Naive thymus-derived CD4-positive, alpha-beta T cell (primary cell): ENCODE measurements at regions of chr17 and their contacts with region 1.

Region 1: GRCh38 chr17:42153919-42154742 is 658 bp downstream of the RAB5C start:
- DNase-seq: no peak
- ATAC-seq: no peak
- H3K4me3 ChIP-seq: peak overlapping the region; percentile 76
- H3K4me3 Mint-ChIP-seq: peak overlapping the region; percentile 81 to 97 (median 94)
- H3K27ac ChIP-seq: peak overlapping the region; percentile 94
- H3K27ac Mint-ChIP-seq: peak overlapping the region; percentile 79 to 96 (median 93)
- H3K4me1 ChIP-seq: peaks cover 10 to 16% of the 10 kb centered on the region in 2 donors
- H3K4me1 Mint-ChIP-seq: peaks cover 21 to 43% (median 37%) of the 10 kb centered on the region in 7 donors
- H3K27me3 ChIP-seq: no peaks in the 10 kb centered on the region
- H3K27me3 Mint-ChIP-seq: no peaks in the 10 kb centered on the region

Region 2: GRCh38 chr17:41918314-41919164 is 235.6 kb before region 1 on chr17 and contains the start of gene ACLY:
- CTCF ChIA-PET with region 1: no interaction called
- POLR2A ChIA-PET with region 1: no interaction called
- intact Hi-C with region 1: loop called in 1 of 2 experiments (anchors 2 kb)
- DNase-seq: peak; percentile 88 to 99 (median 92)
- ATAC-seq: peak; percentile 100
- H3K4me3 ChIP-seq: peak within 1 kb of the TSS; percentile 94
- H3K4me3 Mint-ChIP-seq: peak within 1 kb of the TSS; percentile 84 to 99 (median 89)
- H3K27ac ChIP-seq: peak within 1 kb of the TSS; percentile 79
- H3K27ac Mint-ChIP-seq: peak within 1 kb of the TSS; percentile 48 to 97 (median 78)
- H3K4me1 ChIP-seq: peaks cover 8 to 14% of the 10 kb centered on the region in 2 donors
- H3K4me1 Mint-ChIP-seq: peaks cover 29 to 48% (median 35%) of the 10 kb centered on the region in 7 donors
- H3K27me3 ChIP-seq: no peaks in the 10 kb centered on the region
- H3K27me3 Mint-ChIP-seq: no peaks in the 10 kb centered on the region
- total RNA-seq, gene ACLY: 59.2 to 154 (median 70.8) TPM

Region 3: DNA sequence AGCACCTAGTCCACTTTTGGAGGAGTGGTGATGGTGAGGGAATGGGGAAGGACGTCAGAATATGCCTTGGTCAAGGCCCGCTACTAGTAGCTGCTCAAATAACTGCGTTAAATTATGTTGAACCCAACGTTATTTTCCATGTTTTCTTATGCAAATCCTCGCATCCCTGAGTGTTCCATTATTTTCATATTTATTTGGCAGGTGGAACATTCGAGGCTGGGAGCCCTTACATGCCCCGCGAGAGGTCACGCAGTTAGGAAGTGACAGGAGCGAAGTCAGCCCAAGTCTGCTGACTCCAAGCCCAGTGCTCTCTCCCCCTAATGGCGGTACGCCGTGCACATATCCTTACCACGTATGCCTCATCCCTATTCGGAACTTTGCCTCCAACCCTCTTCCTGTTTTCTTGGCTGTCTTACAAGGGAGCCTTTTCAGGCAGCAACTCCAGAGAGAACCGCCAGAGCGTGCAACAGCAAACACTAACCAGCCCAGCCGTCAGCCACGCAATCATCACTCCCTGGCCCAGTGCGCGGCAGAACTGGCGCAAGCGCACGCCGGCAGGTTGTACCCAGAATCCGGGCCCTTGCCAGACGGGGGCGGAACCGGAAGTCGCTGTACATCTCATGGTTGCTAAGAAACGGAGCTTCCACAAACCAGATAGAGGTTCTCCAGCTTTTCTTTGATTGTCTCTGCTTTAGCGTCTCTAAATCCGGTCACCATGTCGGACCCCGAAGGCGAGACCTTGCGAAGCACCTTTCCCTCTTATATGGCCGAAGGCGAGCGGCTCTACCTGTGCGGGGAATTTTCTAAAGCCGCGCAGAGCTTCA is 223.9 kb before region 1 on chr17 and contains the start of gene ODAD4:
- CTCF ChIA-PET with region 1: no interaction called
- POLR2A ChIA-PET with region 1: interaction called, 6 read pairs
- intact Hi-C with region 1: loop called in 1 of 2 experiments (anchors 1 kb)
- DNase-seq: peak; percentile 87 to 98 (median 97)
- ATAC-seq: peak; percentile 98
- H3K4me3 ChIP-seq: peak within 1 kb of the TSS; percentile 79
- H3K4me3 Mint-ChIP-seq: peak within 1 kb of the TSS; percentile 93 to 100 (median 96)
- H3K27ac ChIP-seq: peak within 1 kb of the TSS; percentile 84
- H3K27ac Mint-ChIP-seq: peak within 1 kb of the TSS; percentile 90 to 100 (median 96)
- H3K4me1 ChIP-seq: peaks cover 9 to 11% of the 10 kb centered on the region in 2 donors
- H3K4me1 Mint-ChIP-seq: peaks cover 18 to 52% (median 24%) of the 10 kb centered on the region in 7 donors
- H3K27me3 ChIP-seq: no peaks in the 10 kb centered on the region
- H3K27me3 Mint-ChIP-seq: no peaks in the 10 kb centered on the region
- total RNA-seq, gene ODAD4: 0.16 to 4.1 (median 1.6) TPM in 4 of 5 experiments, not detected in the other

Region 4: GRCh38 chr17:42120770-42121769 is 33.1 kb before region 1 on chr17 and contains the start of gene KAT2A:
- CTCF ChIA-PET with region 1: no interaction called
- POLR2A ChIA-PET with region 1: interaction called, 5 read pairs
- intact Hi-C with region 1: loop called (anchors 1 kb)
- DNase-seq: peak; percentile 48 to 80 (median 68)
- ATAC-seq: peak; percentile 92
- H3K4me3 ChIP-seq: peak within 1 kb of the TSS; percentile 56
- H3K4me3 Mint-ChIP-seq: peak within 1 kb of the TSS; percentile 58 to 85 (median 74)
- H3K27ac ChIP-seq: peak within 1 kb of the TSS; percentile 75
- H3K27ac Mint-ChIP-seq: peak within 1 kb of the TSS in 8 of 9 donors; percentile 31 to 79 (median 68)
- H3K4me1 ChIP-seq: peaks cover 4 to 15% of the 10 kb centered on the region in 2 donors
- H3K4me1 Mint-ChIP-seq: peaks cover 10 to 35% (median 21%) of the 10 kb centered on the region in 7 donors
- H3K27me3 ChIP-seq: no peaks in the 10 kb centered on the region
- H3K27me3 Mint-ChIP-seq: no peaks in the 10 kb centered on the region
- total RNA-seq, gene KAT2A: 39.6 to 71.1 (median 49.1) TPM

Region 5: DNA sequence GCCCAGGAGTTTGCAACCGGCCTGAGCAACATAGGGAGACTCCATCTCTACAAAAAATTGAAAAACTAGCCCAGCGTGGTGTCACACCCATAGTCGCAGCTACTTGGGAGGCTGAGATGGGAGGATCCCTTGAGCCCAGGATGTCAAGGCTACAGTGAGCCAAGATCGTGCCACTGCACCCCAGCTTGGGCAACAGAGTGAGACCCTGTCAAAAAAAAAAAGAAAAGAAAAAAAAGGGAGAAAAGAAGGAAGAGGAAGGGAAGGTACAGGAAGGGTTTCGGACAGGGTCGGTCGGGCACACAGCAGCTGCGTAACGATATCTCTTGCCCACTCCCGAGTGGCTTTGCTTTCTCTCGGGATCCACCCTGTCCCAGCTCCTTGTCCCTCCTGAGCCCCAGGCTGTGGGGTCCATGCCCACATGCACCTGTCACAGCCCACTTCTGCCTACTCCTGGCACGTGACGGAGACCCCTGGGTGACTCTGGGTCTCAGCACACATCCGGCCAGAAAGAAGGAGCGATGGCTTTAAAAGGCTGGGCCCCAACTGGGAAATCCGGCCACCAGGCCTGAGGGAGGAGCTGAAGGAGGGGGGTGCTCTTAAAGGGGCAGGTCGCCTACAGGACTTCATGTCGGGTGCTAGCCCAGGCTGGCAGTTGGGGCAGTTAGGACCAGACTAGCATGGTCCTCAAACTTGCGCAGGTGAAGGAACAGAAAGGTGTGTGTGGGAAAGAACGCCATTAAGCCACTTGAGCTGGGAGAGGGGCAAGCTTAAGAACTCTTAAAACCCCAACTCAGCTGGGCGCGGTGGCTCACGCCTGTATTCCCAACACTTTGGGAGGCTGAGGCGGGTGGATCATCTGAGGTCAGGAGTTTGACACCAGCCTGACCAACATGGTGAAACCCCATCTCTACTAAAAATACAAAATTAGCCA is 40.1 kb after region 1 on chr17 and contains the start of gene GHDC:
- CTCF ChIA-PET with region 1: interaction called, 6 read pairs
- POLR2A ChIA-PET with region 1: no interaction called
- intact Hi-C with region 1: loop called (anchors 1 kb)
- DNase-seq: peak; percentile 48 to 83 (median 75)
- ATAC-seq: peak; percentile 94
- H3K4me3 ChIP-seq: peak within 1 kb of the TSS; percentile 98
- H3K4me3 Mint-ChIP-seq: peak within 1 kb of the TSS; percentile 93 to 99 (median 95)
- H3K27ac ChIP-seq: peak within 1 kb of the TSS; percentile 82
- H3K27ac Mint-ChIP-seq: peak within 1 kb of the TSS; percentile 86 to 94 (median 90)
- H3K4me1 ChIP-seq: peaks cover 4 to 19% of the 10 kb centered on the region in 2 donors
- H3K4me1 Mint-ChIP-seq: peaks cover 13 to 33% (median 23%) of the 10 kb centered on the region in 7 donors
- H3K27me3 ChIP-seq: no peaks in the 10 kb centered on the region
- H3K27me3 Mint-ChIP-seq: no peaks in the 10 kb centered on the region
- total RNA-seq, gene GHDC: 15.5 to 29.8 (median 19.9) TPM

Region 6: GRCh38 chr17:42287926-42288802 is 134.0 kb after region 1 on chr17 and contains the start of gene STAT5A:
- CTCF ChIA-PET with region 1: no interaction called
- POLR2A ChIA-PET with region 1: no interaction called
- intact Hi-C with region 1: loop called in 1 of 2 experiments (anchors 1 kb)
- DNase-seq: peak; percentile 58 to 83 (median 79)
- ATAC-seq: peak; percentile 90
- H3K4me3 ChIP-seq: peak within 1 kb of the TSS; percentile 88
- H3K4me3 Mint-ChIP-seq: peak within 1 kb of the TSS; percentile 87 to 97 (median 93)
- H3K27ac ChIP-seq: peak within 1 kb of the TSS; percentile 93
- H3K27ac Mint-ChIP-seq: peak within 1 kb of the TSS; percentile 93 to 99 (median 96)
- H3K4me1 ChIP-seq: peaks cover 18 to 24% of the 10 kb centered on the region in 2 donors
- H3K4me1 Mint-ChIP-seq: peaks cover 27 to 65% (median 54%) of the 10 kb centered on the region in 7 donors
- H3K27me3 ChIP-seq: no peaks in the 10 kb centered on the region
- H3K27me3 Mint-ChIP-seq: no peaks in the 10 kb centered on the region
- total RNA-seq, gene STAT5A: 111 to 162 (median 150) TPM

Region 7: DNA sequence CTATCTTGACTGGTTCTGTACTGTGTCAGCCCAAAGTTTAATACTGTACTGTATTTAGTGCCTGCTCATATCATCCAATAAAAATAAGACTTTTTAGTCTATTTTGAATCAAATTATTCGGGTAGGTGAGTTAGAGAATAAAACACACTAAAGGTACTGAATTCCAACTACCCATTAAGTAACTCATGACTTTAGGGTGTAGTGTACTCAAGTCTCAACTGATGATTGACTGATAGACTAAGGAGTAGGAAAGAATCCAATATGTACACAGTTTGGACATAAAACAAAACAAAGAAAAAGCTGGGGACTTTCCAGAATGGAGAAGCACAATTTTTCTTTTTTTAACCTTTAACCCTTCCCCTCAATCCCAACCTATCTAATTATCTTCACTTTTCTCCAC is 586.6 kb after region 1 on chr17:
- CTCF ChIA-PET with region 1: no interaction called
- POLR2A ChIA-PET with region 1: no interaction called
- intact Hi-C with region 1: no loop called
- DNase-seq: no peak
- ATAC-seq: no peak
- H3K4me3 ChIP-seq: no peak overlapping the region
- H3K4me3 Mint-ChIP-seq: no peak overlapping the region
- H3K27ac ChIP-seq: no peak overlapping the region
- H3K27ac Mint-ChIP-seq: no peak overlapping the region
- H3K4me1 ChIP-seq: peaks cover 12 to 16% of the 10 kb centered on the region in 2 donors
- H3K4me1 Mint-ChIP-seq: peaks cover 16 to 38% (median 27%) of the 10 kb centered on the region in 7 donors
- H3K27me3 ChIP-seq: no peaks in the 10 kb centered on the region
- H3K27me3 Mint-ChIP-seq: peaks cover 0 to 6% (median 0%) of the 10 kb centered on the region in 5 donors